ENCODE measurements at regions of chr13 and their contacts with region 1.

Region 1: DNA sequence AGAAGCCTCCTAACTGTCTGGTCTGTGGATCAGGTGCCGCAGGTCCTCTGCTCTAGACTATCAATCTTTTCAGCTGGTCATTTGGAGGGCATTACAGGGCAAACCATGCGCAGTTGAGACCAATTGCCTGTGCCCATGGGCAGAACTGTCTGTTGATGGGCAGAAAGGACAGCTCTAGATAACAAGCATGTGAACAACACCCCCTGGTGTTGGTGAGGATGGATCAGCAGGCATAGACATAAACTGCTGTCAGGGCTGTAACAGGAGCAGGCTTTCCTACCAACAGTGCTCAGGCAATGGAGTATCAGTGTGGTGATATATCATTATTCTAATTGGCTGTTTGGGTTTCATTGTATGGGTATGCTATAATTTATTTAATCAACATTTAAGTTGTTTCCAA is 104.7 kb upstream of the KL start:
- DNase-seq: no peak
- H3K4me3 ChIP-seq: no peak overlapping the region
- CTCF ChIP-seq: peak; percentile 32

Region 2: DNA sequence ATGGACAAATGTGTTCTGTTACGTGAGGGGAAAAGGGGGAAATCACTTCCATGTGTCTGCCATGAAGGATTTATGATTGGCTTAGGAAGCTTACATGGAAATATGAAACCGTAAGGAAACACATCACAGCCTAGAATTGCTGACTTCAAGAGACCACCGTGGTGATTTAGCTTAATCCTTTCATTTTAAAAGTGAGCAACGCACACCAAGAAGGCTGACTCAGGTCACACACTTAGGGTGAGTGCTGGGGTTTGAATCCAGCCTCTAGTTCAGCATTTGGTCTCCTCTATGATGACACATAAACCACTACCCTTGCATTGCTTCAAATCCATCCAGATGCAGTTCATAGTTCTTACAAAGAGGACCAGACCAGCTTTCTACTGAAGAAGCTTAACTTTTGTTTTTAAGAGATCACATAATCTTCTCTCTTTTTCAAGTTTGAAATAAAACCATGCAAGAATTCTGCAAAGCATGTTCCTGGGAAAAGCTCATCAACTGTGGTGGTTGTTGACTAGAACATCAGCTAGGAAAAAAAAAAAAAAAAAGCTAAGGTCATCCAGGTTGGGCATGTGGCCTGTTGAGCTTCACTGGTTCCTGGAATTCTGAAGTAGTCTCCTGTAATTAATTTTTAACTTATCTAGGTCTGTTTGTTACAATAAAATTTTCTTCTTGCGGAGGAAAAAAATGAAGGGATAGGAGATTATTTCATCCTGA is 44.5 kb after region 1 on chr13:
- in situ Hi-C with region 1: loop called (anchors 5 kb)
- DNase-seq: no peak
- H3K4me3 ChIP-seq: no peak overlapping the region
- CTCF ChIP-seq: no peak